ENCODE measurements at regions of chr7 and their contacts with region 1.

Region 1: GRCh38 chr7:132065193-132065988 is 509.0 kb upstream of the PODXL start:
- DNase-seq: peak; percentile 80 to 84
- ATAC-seq: peak; percentile 90
- H3K4me3 ChIP-seq: no peak overlapping the region
- H3K27ac ChIP-seq: peak overlapping the region; percentile 83 to 97
- H3K4me1 ChIP-seq: peaks cover 0 to 2% of the 10 kb centered on the region in 2 donors
- H3K27me3 ChIP-seq: no peaks in the 10 kb centered on the region

Region 2: DNA sequence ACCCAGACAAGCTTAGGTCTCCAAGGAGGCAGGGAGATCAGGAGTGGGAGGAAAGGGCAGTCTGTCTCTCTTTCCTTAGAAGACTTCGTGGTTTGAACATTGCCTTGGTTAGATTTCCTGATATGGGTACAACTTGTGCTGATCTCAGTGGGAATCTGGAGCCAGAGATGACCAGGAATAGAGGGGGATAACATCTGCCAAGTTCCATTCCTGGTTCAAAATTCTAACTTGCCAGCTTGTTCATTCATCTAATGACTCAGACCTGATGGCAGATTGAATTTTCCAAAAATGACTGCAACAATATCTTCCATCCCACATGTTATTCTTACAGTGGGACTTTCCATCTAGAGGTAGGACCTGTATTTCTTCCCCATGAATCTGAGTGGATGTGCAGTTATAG is 114.6 kb before region 1 on chr7:
- intact Hi-C with region 1: loop called (anchors 2 to 5 kb)
- DNase-seq: no peak
- ATAC-seq: peak; percentile 60
- H3K4me3 ChIP-seq: no peak overlapping the region
- H3K27ac ChIP-seq: peak overlapping the region; percentile 82 to 98
- H3K4me1 ChIP-seq: peaks cover 3 to 8% of the 10 kb centered on the region in 2 donors
- H3K27me3 ChIP-seq: no peaks in the 10 kb centered on the region

Region 3: DNA sequence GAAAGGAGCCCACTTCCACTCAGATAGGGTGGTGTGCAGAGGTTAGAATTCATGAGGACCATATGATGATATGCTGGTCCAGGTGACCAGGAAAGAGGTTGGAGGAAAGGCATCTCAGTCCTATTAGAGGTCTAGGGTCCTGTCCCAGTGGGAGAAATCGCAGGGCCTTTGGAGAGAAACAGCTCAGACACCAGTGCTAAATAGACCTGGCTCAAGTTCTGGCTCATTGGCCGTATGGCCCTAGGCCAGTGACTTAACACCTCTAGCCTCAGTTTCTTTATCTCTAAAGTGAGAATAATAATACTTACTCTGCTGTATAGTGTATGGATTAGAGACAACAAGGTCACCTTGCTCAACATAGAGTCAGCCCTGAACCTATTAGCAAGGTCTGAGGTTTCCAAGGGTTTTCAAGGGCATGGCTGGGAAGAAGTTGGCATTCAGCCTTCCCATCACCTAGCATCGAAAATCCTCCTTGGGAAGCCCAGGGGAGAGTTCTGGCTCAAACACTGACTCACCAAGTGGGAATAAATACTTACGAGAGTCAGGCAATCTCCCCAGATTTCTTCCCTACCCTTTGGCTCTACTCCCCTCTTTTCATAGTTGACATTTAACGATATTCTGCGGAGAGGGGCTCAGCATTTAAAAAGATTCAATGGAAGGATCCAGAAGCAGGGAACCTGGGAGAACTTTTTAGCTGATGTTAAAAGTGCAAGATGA is 35.9 kb before region 1 on chr7:
- intact Hi-C with region 1: loop called in 1 of 2 experiments (anchors 5 kb)
- DNase-seq: no peak
- ATAC-seq: no peak
- H3K4me3 ChIP-seq: no peak overlapping the region
- H3K27ac ChIP-seq: no peak overlapping the region
- H3K4me1 ChIP-seq: no peaks in the 10 kb centered on the region
- H3K27me3 ChIP-seq: no peaks in the 10 kb centered on the region

Region 4: DNA sequence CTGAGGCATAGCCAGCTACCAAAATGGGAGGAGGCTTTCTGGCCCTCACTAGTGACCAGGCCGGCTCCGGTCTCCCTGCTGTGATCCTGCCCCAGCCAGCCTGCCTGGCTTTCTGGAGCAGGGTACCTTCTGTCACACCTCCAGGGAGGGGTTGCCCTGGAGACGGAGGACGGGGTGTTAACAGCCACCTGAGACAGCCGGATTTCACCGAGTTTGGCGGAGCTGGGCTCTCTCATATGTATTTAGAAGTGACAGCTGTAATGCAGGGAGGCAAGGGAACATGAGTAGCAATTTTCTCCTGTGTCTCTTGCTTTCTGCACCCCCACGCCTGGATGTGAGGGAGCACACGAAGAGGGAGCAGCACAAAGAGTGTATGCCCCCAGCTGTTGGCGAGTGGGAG is 37.6 kb after region 1 on chr7:
- intact Hi-C with region 1: no loop called
- DNase-seq: no peak
- ATAC-seq: no peak
- H3K4me3 ChIP-seq: no peak overlapping the region
- H3K27ac ChIP-seq: no peak overlapping the region
- H3K4me1 ChIP-seq: no peaks in the 10 kb centered on the region
- H3K27me3 ChIP-seq: no peaks in the 10 kb centered on the region

Region 5: GRCh38 chr7:132250883-132251653 is 185.7 kb after region 1 on chr7:
- intact Hi-C with region 1: loop called in 1 of 2 experiments (anchors 10 kb)
- DNase-seq: peak; percentile 86 to 88
- ATAC-seq: peak; percentile 73
- H3K4me3 ChIP-seq: no peak overlapping the region
- H3K27ac ChIP-seq: no peak overlapping the region
- H3K4me1 ChIP-seq: peaks cover 2% of the 10 kb centered on the region in 2 donors
- H3K27me3 ChIP-seq: no peaks in the 10 kb centered on the region